ENCODE measurements at regions of chr10 and their contacts with region 1.

Region 1: GRCh38 chr10:5889624-5890451 is at the starts of genes ANKRD16 and FBH1:
- DNase-seq: peak; percentile 89 to 99
- ATAC-seq: peak; percentile 88 to 97
- H3K4me3 ChIP-seq: peak within 1 kb of the TSS; percentile 81
- H3K27ac ChIP-seq: peak within 1 kb of the TSS; percentile 89 to 97
- H3K4me1 ChIP-seq: peaks cover 23% of the 10 kb centered on the region
- CTCF ChIP-seq: no peak
- EP300 ChIP-seq: no peak
- POLR2A ChIP-seq: peak; percentile 99
- RAD21 ChIP-seq: no peak
- polyA plus RNA-seq, gene ANKRD16: 8.9 and 13.1 TPM in 2 replicates
- polyA plus RNA-seq, gene FBH1: 56.5 and 69.8 TPM in 2 replicates

Region 2: DNA sequence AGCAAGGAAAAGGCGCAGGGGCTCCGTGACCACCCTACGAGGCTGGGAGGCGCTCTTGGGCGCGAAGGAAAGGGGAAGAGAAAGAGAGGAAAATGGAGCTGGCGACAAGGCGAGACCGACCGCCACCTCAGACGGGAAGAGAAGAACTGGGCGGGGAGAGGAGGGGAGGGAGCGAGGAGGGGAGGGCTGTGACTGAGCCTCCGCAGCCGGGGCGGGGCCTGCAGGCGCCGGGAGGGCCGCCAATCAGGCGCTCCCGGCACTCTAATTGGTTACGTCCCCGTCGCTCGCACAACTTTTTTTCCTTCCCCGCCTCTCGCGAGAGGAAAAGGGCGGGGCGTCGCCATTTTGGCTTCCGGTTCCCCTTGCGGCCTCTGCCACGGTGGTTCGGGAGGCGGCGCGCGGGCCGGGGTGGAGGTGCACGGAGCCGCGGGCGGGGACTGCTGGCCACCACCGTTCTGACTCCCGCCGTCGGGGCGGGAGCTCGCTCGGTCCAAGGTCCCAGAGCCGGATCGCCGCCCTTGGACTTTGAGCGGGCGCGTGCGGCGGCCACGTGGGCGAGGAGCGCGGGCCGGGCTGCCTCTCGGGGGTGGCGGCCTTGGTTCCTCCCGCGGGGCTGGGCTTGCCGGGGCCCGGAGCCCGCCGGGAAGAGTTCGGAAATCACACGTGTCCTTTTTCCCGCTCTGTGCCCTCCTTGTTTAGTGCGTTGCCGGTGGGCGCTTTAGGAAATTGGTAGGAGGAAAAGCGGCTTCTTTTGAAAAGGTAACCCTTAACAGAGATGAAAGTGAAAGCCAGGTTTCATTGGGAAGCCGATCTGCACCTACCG is 76.3 kb before region 1 on chr10 and contains the start of gene GDI2:
- CTCF ChIA-PET with region 1: no interaction called
- POLR2A ChIA-PET with region 1: interaction called, 15 read pairs
- DNase-seq: peak; percentile 95 to 97
- ATAC-seq: peak; percentile 94 to 95
- H3K4me3 ChIP-seq: peak within 1 kb of the TSS; percentile 97
- H3K27ac ChIP-seq: peak within 1 kb of the TSS; percentile 97 to 99
- H3K4me1 ChIP-seq: peaks cover 33% of the 10 kb centered on the region
- CTCF ChIP-seq: no peak
- EP300 ChIP-seq: no peak
- POLR2A ChIP-seq: peak; percentile 83
- RAD21 ChIP-seq: no peak
- polyA plus RNA-seq, gene GDI2: 229 and 278 TPM in 2 replicates

Region 3: GRCh38 chr10:6144406-6145165 is 254.7 kb after region 1 on chr10:
- CTCF ChIA-PET with region 1: no interaction called
- POLR2A ChIA-PET with region 1: no interaction called
- DNase-seq: peak; percentile 73 to 77
- ATAC-seq: peak; percentile 89 to 91
- H3K4me3 ChIP-seq: peak overlapping the region; percentile 92
- H3K27ac ChIP-seq: peak overlapping the region; percentile 88 to 92
- H3K4me1 ChIP-seq: peaks cover 22% of the 10 kb centered on the region
- CTCF ChIP-seq: no peak
- EP300 ChIP-seq: no peak
- POLR2A ChIP-seq: peak; percentile 52
- RAD21 ChIP-seq: no peak

Measured in A549 (cell line).